WTC11 (cell line): ENCODE measurements at regions of chr11 and their contacts with region 1.

Region 1: GRCh38 chr11:32323814-32324130 is 111.6 kb downstream of the WT1 start:
- DNase-seq: no peak
- ATAC-seq: no peak
- H3K4me3 Mint-ChIP-seq: no peak overlapping the region
- H3K27ac Mint-ChIP-seq: no peak overlapping the region
- H3K4me1 Mint-ChIP-seq: no peaks in the 10 kb centered on the region
- H3K27me3 Mint-ChIP-seq: peaks cover 7% of the 10 kb centered on the region
- CTCF ChIP-seq: no peak

Region 2: GRCh38 chr11:32312865-32313403 is 10.8 kb before region 1 on chr11:
- CTCF ChIA-PET with region 1: interaction called, 36 read pairs
- POLR2A ChIA-PET with region 1: no interaction called
- DNase-seq: peak; percentile 39
- ATAC-seq: peak; percentile 86
- H3K4me3 Mint-ChIP-seq: peak overlapping the region; percentile 9; the same call in 1 of the 2 replicates
- H3K27ac Mint-ChIP-seq: no peak overlapping the region
- H3K4me1 Mint-ChIP-seq: peaks cover 19% of the 10 kb centered on the region
- H3K27me3 Mint-ChIP-seq: no peaks in the 10 kb centered on the region; the same call in 1 of the 2 replicates
- CTCF ChIP-seq: peak; percentile 54; the same call in 1 of the 2 replicates